Vagina (tissue), 2 donors: ENCODE measurements at regions of chr9 and their contacts with region 1.

Region 1: DNA sequence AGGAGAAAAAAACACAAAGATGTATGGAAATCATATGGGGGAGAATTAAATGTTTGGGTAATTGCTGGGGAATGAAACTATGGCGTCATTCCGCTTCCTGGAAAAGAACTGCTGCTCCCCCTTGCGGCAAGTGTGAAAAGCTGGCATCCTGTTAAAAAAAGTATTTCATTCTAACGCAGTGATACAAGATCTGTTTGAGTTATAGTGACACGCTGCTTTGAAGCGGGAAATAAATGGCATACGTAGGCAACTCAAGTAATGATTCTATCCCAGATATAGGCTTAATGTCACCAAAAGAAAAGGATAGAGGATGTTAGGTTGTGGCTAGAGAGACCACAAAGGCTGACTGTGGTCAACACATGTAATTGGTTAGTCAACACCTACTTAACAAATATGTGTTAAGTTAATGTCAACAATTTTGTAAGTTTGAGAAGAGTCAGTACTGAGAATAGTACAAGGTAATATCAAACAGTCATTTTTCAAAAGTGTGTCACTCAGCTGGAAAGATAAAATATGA is 70.2 kb upstream of the ALDH1A1 start:
- DNase-seq: no peak
- H3K4me3 ChIP-seq: no peak overlapping the region
- H3K27ac ChIP-seq: no peak overlapping the region
- H3K4me1 ChIP-seq: no peaks in the 10 kb centered on the region
- H3K27me3 ChIP-seq: no peaks in the 10 kb centered on the region
- CTCF ChIP-seq: peak; percentile 31 to 79 (median 54)
- POLR2A ChIP-seq: no peak

Region 2: DNA sequence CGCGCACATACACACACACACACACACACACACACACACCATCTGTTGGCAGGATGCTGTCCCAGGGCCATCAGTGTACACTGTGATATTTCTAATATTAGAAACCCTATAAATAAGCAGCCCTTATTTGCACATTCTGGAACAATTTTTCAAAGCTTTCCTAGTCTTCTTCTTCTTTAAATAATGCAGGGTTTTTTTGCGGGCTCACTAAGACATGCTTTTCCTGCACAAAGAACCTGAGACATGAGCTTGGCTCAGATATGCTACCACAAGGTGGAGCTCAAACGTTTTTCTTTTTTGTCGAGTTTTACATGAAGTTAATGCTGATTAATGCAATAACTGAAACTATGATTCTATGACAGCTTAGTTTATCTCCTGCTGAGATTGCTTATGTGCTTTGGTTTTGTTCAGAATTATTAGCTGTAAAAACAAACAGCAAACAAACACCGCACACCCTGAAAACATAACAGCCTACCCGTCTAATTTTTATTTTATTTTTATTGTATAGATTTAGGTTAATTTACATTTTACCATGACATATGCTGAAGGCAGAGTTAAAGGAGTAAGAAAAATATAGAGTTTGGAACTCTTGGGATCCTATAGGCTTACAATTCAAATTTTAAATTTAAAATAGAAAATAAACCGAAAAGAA is 166.0 kb before region 1 on chr9:
- intact Hi-C with region 1: loop called (anchors 5 kb)
- DNase-seq: no peak
- H3K4me3 ChIP-seq: no peak overlapping the region
- H3K27ac ChIP-seq: no peak overlapping the region
- H3K4me1 ChIP-seq: peaks cover 16% of the 10 kb centered on the region
- H3K27me3 ChIP-seq: no peaks in the 10 kb centered on the region
- CTCF ChIP-seq: peak; percentile 33 to 63 (median 62)
- POLR2A ChIP-seq: no peak

Region 3: GRCh38 chr9:73093740-73094379 is 70.8 kb after region 1 on chr9:
- intact Hi-C with region 1: loop called (anchors 10 kb)
- DNase-seq: no peak
- H3K4me3 ChIP-seq: peak overlapping the region in 1 of 2 donors; percentile 18
- H3K27ac ChIP-seq: peak overlapping the region; percentile 40
- H3K4me1 ChIP-seq: peaks cover 6% of the 10 kb centered on the region
- H3K27me3 ChIP-seq: no peaks in the 10 kb centered on the region
- CTCF ChIP-seq: no peak
- POLR2A ChIP-seq: no peak